ENCODE measurements at regions of chr10 and their contacts with region 1.

Region 1: DNA sequence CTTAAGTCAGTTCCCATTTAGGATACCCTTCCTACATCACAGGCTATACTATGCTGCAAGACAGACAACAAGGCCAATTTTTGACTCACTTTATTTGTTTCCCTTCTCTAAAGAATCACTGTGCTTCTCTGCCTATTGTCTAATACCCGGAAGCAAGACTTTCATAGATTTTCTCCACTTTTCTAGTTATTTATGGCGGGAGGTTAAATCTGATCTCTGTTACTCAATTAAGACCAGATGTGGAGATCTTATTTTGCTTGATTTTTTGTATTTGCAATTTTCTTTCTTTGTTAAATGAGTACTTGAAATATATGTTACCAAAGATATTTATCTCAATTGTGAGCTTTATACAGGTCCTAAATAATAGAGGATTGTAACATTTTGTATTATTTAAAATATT is 511.5 kb downstream of the ATRNL1 start:
- DNase-seq: no peak
- H3K4me3 Mint-ChIP-seq: no peak overlapping the region
- H3K27ac Mint-ChIP-seq: no peak overlapping the region
- H3K4me1 Mint-ChIP-seq: no peaks in the 10 kb centered on the region
- H3K27me3 Mint-ChIP-seq: no peaks in the 10 kb centered on the region
- CTCF ChIP-seq: no peak

Region 2: GRCh38 chr10:115441907-115442544 is 162.6 kb before region 1 on chr10:
- CTCF ChIA-PET with region 1: interaction called, 11 read pairs
- intact Hi-C with region 1: no loop called
- DNase-seq: no peak
- H3K4me3 Mint-ChIP-seq: no peak overlapping the region
- H3K27ac Mint-ChIP-seq: no peak overlapping the region
- H3K4me1 Mint-ChIP-seq: no peaks in the 10 kb centered on the region
- H3K27me3 Mint-ChIP-seq: no peaks in the 10 kb centered on the region
- CTCF ChIP-seq: no peak

Region 3: DNA sequence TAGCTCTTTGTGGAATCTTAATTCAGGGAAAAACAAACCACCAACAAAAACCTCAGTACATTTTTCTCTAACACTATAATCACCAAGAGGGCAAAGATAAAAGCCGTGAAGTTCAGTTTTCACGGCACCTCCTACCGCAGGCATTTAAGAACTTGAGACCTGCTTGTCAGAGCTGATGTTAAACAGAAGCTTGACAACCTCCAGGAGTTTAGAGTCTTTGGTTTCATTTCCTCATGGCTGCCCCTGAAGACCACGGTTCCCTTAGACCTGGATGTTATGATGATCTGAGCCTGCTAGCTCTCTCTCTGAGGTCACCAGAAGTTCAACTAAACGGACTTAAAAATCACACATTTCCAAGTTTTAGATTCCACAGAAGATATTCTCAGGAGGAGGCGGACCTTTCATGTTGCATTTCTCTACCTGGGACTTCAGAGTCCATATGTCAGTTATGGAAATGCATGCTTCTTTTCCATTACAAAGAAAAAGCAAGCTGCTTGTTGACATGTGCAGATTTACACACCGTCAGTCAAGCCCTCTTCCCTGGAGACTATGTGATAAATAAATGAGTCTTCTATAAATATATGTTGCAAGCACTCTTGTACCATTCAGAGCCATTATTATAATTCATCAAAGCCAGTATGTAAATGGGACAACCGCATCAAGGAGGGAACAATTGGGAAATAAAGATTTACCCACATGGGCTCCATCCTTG is 410.4 kb after region 1 on chr10:
- CTCF ChIA-PET with region 1: no interaction called
- intact Hi-C with region 1: no loop called
- DNase-seq: no peak
- H3K4me3 Mint-ChIP-seq: no peak overlapping the region
- H3K27ac Mint-ChIP-seq: no peak overlapping the region
- H3K4me1 Mint-ChIP-seq: no peaks in the 10 kb centered on the region
- H3K27me3 Mint-ChIP-seq: peaks cover 21% of the 10 kb centered on the region
- CTCF ChIP-seq: no peak